T-cell (primary cell): ENCODE measurements at regions of chr1 and their contacts with region 1.

Region 1: GRCh38 chr1:114581335-114582287 is at the start of gene BCAS2:
- DNase-seq: peak; percentile 85 to 99 (median 96)
- ATAC-seq: peak; percentile 94 to 98 (median 97)
- H3K4me3 ChIP-seq: peak within 1 kb of the TSS; percentile 53 to 88
- H3K4me3 Mint-ChIP-seq: peak within 1 kb of the TSS; percentile 84 to 97 (median 97)
- H3K27ac ChIP-seq: peak within 1 kb of the TSS; percentile 94
- H3K27ac Mint-ChIP-seq: peak within 1 kb of the TSS; percentile 96 to 99
- H3K4me1 ChIP-seq: peaks cover 7 to 19% of the 10 kb centered on the region in 2 experiments
- H3K4me1 Mint-ChIP-seq: peaks cover 44 to 49% (median 49%) of the 10 kb centered on the region in 3 donors
- H3K27me3 ChIP-seq: no peaks in the 10 kb centered on the region
- H3K27me3 Mint-ChIP-seq: no peaks in the 10 kb centered on the region
- total RNA-seq, gene BCAS2: 29.6 to 77.7 (median 32.4) TPM

Region 2: GRCh38 chr1:114511032-114511785 is 70.4 kb before region 1 on chr1 and contains the start of gene TRIM33:
- CTCF ChIA-PET with region 1: interaction called in 1 of 2 experiments, 5 read pairs
- POLR2A ChIA-PET with region 1: interaction called, 5 to 16 read pairs
- DNase-seq: peak; percentile 86 to 98 (median 90)
- ATAC-seq: peak; percentile 80 to 86 (median 81)
- H3K4me3 ChIP-seq: peak within 1 kb of the TSS; percentile 89
- H3K4me3 Mint-ChIP-seq: peak within 1 kb of the TSS; percentile 87 to 99 (median 98)
- H3K27ac ChIP-seq: peak within 1 kb of the TSS; percentile 96
- H3K27ac Mint-ChIP-seq: peak within 1 kb of the TSS; percentile 99
- H3K4me1 ChIP-seq: peaks cover 25 to 35% of the 10 kb centered on the region in 2 experiments
- H3K4me1 Mint-ChIP-seq: peaks cover 48 to 54% (median 49%) of the 10 kb centered on the region in 3 donors
- H3K27me3 ChIP-seq: no peaks in the 10 kb centered on the region
- H3K27me3 Mint-ChIP-seq: no peaks in the 10 kb centered on the region
- total RNA-seq, gene TRIM33: 41.6 to 60.6 (median 47.3) TPM

Region 3: GRCh38 chr1:114558544-114558943 is 23.1 kb before region 1 on chr1:
- CTCF ChIA-PET with region 1: no interaction called
- POLR2A ChIA-PET with region 1: no interaction called
- DNase-seq: peak in 1 of 35 experiments; percentile 39
- ATAC-seq: peak in 2 of 4 experiments; percentile 51 to 58
- H3K4me3 ChIP-seq: no peak overlapping the region
- H3K4me3 Mint-ChIP-seq: no peak overlapping the region
- H3K27ac ChIP-seq: no peak overlapping the region
- H3K27ac Mint-ChIP-seq: no peak overlapping the region
- H3K4me1 ChIP-seq: no peaks in the 10 kb centered on the region
- H3K4me1 Mint-ChIP-seq: peaks cover 0 to 2% (median 0%) of the 10 kb centered on the region in 3 donors
- H3K27me3 ChIP-seq: no peaks in the 10 kb centered on the region
- H3K27me3 Mint-ChIP-seq: no peaks in the 10 kb centered on the region

Region 4: DNA sequence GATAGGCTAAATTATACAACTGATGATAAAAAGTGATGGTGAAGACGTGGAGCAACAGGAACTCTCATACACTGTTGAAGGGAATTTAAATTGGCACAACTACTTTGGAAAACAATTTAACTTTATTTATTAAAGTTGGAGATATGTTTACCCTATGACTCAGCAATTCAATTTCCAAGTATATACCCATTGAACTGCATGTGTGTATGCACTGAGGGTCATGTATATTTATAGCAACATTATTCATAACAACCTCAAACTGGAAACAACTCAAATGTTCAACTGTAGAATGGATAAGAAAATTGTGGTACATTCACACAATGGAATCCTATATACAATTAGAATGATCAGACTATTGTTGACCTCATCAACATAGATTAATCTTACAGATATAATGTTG is 16.3 kb after region 1 on chr1:
- CTCF ChIA-PET with region 1: no interaction called
- POLR2A ChIA-PET with region 1: no interaction called
- DNase-seq: no peak
- ATAC-seq: no peak
- H3K4me3 ChIP-seq: no peak overlapping the region
- H3K4me3 Mint-ChIP-seq: no peak overlapping the region
- H3K27ac ChIP-seq: no peak overlapping the region
- H3K27ac Mint-ChIP-seq: no peak overlapping the region
- H3K4me1 ChIP-seq: no peaks in the 10 kb centered on the region
- H3K4me1 Mint-ChIP-seq: no peaks in the 10 kb centered on the region
- H3K27me3 ChIP-seq: no peaks in the 10 kb centered on the region
- H3K27me3 Mint-ChIP-seq: peaks cover 8 to 14% of the 10 kb centered on the region in 2 donors

Region 5: GRCh38 chr1:114641377-114641776 is 59.8 kb after region 1 on chr1:
- CTCF ChIA-PET with region 1: no interaction called
- POLR2A ChIA-PET with region 1: no interaction called
- DNase-seq: no peak
- ATAC-seq: no peak
- H3K4me3 ChIP-seq: no peak overlapping the region
- H3K4me3 Mint-ChIP-seq: no peak overlapping the region
- H3K27ac ChIP-seq: no peak overlapping the region
- H3K27ac Mint-ChIP-seq: no peak overlapping the region
- H3K4me1 ChIP-seq: no peaks in the 10 kb centered on the region
- H3K4me1 Mint-ChIP-seq: no peaks in the 10 kb centered on the region
- H3K27me3 ChIP-seq: no peaks in the 10 kb centered on the region
- H3K27me3 Mint-ChIP-seq: peaks cover 0 to 11% of the 10 kb centered on the region in 2 donors

Region 6: DNA sequence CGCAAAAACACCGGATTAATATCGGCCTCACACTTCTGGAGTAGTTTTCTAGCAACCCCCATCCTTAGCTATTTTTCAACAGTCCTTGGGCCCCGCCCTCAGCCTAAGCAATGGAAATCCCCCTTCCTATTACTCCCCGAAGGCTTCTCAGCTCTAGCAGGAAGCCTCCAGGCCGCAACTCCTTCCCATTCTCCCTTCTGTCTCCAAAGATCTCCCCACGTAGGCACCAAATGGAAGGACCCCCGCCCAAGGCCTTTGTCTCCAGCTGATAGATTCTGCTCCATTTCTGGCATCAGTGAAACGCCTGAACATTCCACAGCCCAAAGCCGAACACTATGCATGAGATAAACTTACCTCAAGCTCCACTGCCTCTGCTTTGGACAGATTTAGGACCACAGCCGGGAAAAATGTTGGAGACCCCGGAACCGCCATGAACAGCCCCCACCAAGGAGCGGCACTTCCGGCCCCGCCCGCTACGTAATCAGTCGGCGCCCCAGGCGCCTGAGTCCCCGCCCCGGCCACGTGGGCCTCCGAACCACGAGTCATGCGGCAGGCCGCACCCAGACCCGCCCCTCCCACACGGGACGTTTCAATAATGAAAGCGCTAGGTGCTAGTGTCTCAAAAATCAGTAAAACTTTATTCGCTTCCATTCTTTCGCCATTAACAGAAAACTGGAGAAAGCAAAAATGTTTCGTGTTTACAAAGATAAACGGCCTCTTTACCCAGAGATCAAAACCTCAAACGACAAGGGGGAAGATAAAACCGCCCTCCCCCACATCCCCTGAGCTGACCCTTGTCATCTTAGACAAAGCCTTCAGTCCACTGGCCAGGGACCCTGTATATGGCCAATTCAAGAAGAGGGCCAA is 134.9 kb after region 1 on chr1 and contains the start of gene NRAS:
- CTCF ChIA-PET with region 1: interaction called, 3 read pairs
- POLR2A ChIA-PET with region 1: interaction called, 3 to 13 read pairs
- DNase-seq: peak; percentile 89 to 96 (median 95)
- ATAC-seq: peak; percentile 95 to 99 (median 98)
- H3K4me3 ChIP-seq: peak within 1 kb of the TSS; percentile 83 to 86
- H3K4me3 Mint-ChIP-seq: peak within 1 kb of the TSS; percentile 91 to 99 (median 96)
- H3K27ac ChIP-seq: peak within 1 kb of the TSS; percentile 98
- H3K27ac Mint-ChIP-seq: peak within 1 kb of the TSS; percentile 95
- H3K4me1 ChIP-seq: peaks cover 15% of the 10 kb centered on the region in 2 experiments
- H3K4me1 Mint-ChIP-seq: peaks cover 26 to 32% (median 30%) of the 10 kb centered on the region in 3 donors
- H3K27me3 ChIP-seq: no peaks in the 10 kb centered on the region
- H3K27me3 Mint-ChIP-seq: no peaks in the 10 kb centered on the region
- total RNA-seq, gene NRAS: 19.9 to 29.7 (median 22.1) TPM

Region 7: GRCh38 chr1:114723457-114723856 is 141.8 kb after region 1 on chr1:
- CTCF ChIA-PET with region 1: interaction called in 1 of 2 experiments, 3 read pairs
- POLR2A ChIA-PET with region 1: interaction called in 1 of 2 experiments, 14 read pairs
- DNase-seq: no peak
- ATAC-seq: no peak
- H3K4me3 ChIP-seq: no peak overlapping the region
- H3K4me3 Mint-ChIP-seq: no peak overlapping the region
- H3K27ac ChIP-seq: no peak overlapping the region
- H3K27ac Mint-ChIP-seq: no peak overlapping the region
- H3K4me1 ChIP-seq: no peaks in the 10 kb centered on the region
- H3K4me1 Mint-ChIP-seq: peaks cover 0 to 4% (median 2%) of the 10 kb centered on the region in 3 donors
- H3K27me3 ChIP-seq: no peaks in the 10 kb centered on the region
- H3K27me3 Mint-ChIP-seq: no peaks in the 10 kb centered on the region

Region 8: DNA sequence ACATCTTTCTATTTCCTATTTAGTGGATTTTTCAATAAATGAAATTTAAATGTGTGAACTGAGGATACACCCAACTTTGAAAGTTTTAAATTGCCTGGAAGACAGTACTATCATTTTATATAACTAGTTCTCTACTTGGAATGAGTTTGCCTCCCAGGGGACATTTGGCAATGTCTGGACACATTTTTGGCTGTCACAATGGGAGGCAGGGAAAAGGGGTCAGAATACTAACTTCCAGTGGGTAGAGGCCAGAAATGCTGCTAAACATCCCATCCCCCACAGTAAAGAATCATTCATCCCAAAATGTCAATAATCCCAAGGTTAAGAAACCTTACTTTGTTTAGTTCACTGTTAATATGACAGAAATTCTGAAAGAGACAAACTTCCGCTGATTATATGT is 148.2 kb after region 1 on chr1:
- CTCF ChIA-PET with region 1: no interaction called
- POLR2A ChIA-PET with region 1: interaction called in 1 of 2 experiments, 14 read pairs
- DNase-seq: no peak
- ATAC-seq: no peak
- H3K4me3 ChIP-seq: no peak overlapping the region
- H3K4me3 Mint-ChIP-seq: no peak overlapping the region
- H3K27ac ChIP-seq: no peak overlapping the region
- H3K27ac Mint-ChIP-seq: no peak overlapping the region
- H3K4me1 ChIP-seq: no peaks in the 10 kb centered on the region
- H3K4me1 Mint-ChIP-seq: peaks cover 0 to 11% (median 6%) of the 10 kb centered on the region in 3 donors
- H3K27me3 ChIP-seq: no peaks in the 10 kb centered on the region
- H3K27me3 Mint-ChIP-seq: no peaks in the 10 kb centered on the region